ENCODE measurements at regions of chr14 and their contacts with region 1.

Region 1: DNA sequence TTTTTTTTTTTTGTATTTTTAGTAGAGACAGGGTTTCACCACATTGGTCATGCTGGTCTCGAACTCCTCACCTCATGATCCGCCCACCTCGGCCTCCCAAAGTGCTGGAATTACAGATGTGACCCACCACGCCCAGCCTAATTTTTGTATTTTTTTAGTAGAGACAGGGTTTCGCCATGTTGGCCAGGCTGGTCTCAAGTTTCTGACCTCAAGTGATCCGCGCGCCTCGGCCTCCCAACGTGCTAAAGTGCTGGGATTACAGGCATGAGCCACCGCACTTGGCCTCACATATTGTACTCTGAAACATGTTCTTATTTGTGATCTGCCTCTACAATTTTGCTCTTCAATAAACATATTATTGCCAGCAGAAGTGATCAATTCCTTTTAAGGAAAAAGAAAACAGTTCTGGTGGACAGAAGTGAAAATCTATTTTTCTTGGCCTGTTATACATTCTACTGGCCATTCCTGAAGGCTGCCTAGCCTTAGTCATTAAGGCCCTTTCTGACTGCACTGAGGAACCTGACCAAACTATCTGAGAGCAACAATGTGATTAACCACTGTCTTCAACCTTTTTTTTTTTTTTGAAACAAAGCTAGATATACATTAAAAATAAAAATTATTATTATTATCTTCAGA is 36.1 kb downstream of the SNX6 start:
- DNase-seq: no peak
- ATAC-seq: no peak
- H3K4me3 ChIP-seq: no peak overlapping the region
- H3K27ac ChIP-seq: no peak overlapping the region
- H3K4me1 ChIP-seq: no peaks in the 10 kb centered on the region
- H3K27me3 ChIP-seq: no peaks in the 10 kb centered on the region

Region 2: DNA sequence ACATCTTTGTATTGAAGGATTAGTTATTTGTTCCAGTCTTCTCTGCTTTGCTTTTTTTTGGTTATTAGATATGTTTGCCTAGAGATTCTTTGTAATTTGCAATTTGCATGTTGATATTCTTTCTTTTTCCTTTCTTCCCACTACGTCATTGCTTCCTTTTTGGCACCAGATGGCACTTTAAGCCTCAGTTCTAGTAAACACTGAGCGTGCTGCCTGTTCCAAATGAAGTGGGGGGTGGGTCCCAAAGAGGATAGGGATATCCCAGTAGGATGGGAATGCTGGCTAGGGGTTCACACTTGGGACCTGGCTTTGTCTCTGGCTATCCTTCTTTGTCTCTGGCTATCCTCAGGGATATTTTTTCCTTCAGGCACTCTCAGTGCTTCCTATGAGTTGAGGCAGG is 71.4 kb before region 1 on chr14:
- intact Hi-C with region 1: loop called in 1 of 4 experiments (anchors 10 kb)
- DNase-seq: no peak
- ATAC-seq: no peak
- H3K4me3 ChIP-seq: no peak overlapping the region
- H3K27ac ChIP-seq: no peak overlapping the region
- H3K4me1 ChIP-seq: no peaks in the 10 kb centered on the region
- H3K27me3 ChIP-seq: no peaks in the 10 kb centered on the region

Region 3: GRCh38 chr14:35068238-35069012 is 474.6 kb after region 1 on chr14:
- intact Hi-C with region 1: no loop called
- DNase-seq: no peak
- ATAC-seq: no peak
- H3K4me3 ChIP-seq: no peak overlapping the region
- H3K27ac ChIP-seq: no peak overlapping the region
- H3K4me1 ChIP-seq: no peaks in the 10 kb centered on the region
- H3K27me3 ChIP-seq: no peaks in the 10 kb centered on the region